Panc1 (cell line): ENCODE measurements at regions of chr16 and their contacts with region 1.

Region 1: DNA sequence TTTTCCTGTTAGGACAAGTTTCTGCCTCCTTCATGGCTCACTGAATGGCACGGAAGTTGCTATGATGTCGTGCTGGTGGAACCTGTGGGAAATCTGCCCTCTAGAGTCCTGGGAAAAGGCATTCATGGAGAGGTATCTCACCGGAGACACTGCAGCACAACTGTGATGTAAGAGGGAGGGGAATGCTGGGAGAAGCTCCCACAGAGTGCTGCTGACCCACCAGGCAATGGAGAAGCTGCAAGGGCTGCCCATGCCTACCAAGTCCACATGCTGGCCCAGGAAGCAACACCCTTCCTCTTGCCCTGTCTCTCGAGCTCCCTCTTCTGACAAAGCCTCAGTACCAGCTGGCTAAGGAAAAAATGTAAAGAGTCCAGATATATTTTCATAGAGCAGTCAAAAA is 45.2 kb upstream of the SLC5A11 start:
- DNase-seq: peak; percentile 12
- ATAC-seq: peak; percentile 84
- H3K4me3 ChIP-seq: no peak overlapping the region
- H3K27ac ChIP-seq: no peak overlapping the region
- H3K4me1 ChIP-seq: no peaks in the 10 kb centered on the region
- H3K27me3 ChIP-seq: no peaks in the 10 kb centered on the region
- CTCF ChIP-seq: peak; percentile 82

Region 2: DNA sequence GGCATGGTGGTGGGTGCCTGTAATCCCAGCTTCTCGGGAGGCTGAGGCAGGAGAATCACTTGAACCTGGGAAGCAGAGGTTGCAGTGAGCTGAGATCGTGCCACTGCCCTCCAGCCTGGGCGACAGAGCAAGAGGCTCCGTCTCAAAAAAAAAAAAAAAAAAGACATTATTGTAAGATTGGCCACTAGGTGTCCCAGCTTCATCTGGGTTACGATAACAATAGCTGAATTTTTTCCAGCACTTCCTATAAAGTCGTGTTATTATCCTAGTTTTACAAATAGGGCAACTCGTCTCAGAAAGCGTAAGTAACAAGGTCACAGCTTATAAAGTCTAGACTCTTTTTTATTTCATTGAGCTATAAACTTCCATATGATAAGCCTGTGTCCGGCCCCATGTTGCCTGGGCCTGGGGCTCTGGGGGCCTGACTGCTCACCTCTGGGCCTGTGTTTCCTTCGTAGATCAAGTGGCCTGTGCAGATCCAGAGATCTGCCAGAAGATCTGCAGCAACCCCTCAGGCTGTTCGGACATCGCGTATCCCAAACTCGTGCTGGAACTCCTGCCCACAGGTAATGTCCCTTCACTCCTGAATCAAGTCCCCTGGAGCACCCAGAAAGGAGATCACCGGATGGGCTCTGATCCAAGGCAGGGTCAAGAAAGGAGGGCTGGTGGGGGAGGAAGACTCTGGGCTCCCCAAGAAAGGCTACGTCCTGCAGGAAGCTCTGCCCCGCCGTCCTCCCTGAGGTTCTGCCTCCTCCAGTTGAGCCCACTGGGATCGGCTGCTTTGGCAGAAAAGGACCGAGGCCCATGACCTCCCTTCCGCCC is 105.8 kb after region 1 on chr16:
- CTCF ChIA-PET with region 1: no interaction called
- POLR2A ChIA-PET with region 1: no interaction called
- in situ Hi-C with region 1: loop called (anchors 25 kb)
- intact Hi-C with region 1: no loop called
- DNase-seq: no peak
- ATAC-seq: peak; percentile 62; the same call in 1 of the 2 replicates
- H3K4me3 ChIP-seq: no peak overlapping the region
- H3K27ac ChIP-seq: no peak overlapping the region
- H3K4me1 ChIP-seq: no peaks in the 10 kb centered on the region
- H3K27me3 ChIP-seq: no peaks in the 10 kb centered on the region
- CTCF ChIP-seq: peak; percentile 77; the same call in 1 of the 2 replicates

Region 3: DNA sequence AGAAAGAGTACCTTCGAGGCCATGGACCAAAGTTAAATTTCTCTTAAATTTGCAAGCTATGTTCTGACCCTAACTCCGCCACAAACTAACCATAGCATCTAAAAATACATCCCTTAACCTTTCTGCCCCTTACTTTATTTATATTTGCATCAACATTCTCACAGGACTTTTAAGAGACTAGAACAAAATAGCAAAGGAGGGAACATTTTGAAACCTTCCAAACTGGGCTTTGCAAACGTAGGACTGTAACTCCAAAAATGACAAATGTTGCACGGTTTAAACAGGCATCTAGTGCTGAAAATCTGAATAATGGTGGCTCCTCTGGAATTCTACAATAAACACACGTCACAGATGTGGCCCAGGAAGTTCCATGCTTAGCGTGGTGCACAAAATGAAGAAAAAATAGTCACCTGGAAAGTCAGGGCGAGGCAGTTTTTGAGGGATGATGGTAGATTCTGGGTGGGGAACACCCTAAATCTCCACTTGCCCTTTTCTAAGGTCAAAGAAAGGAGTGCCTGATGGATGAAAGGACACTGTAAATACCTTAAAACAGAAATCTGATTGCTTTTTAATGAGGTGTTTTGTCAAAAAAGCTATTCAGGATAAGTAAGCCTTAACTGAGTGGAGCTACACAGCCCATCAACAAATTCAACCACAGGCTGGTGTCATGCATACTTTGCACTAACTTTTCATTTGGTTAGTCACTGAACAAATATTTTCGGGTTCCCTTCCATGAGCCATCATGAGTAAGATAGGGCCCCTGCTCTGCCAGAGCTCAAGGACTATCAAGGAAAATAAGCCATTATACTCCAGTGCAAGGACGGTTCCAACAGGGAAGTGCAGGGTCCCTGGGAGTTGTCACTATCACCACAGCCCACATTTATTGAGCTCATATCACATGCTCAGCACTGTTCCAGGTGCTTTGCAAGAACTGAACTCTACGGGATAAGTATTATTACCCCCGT is 193.4 kb after region 1 on chr16:
- CTCF ChIA-PET with region 1: interaction called, 12 read pairs
- POLR2A ChIA-PET with region 1: no interaction called
- in situ Hi-C with region 1: no loop called
- intact Hi-C with region 1: no loop called
- DNase-seq: peak; percentile 85
- ATAC-seq: peak; percentile 90
- H3K4me3 ChIP-seq: peak overlapping the region in 1 of 2 experiments; percentile 31; a peak in 2 of 4 replicates
- H3K27ac ChIP-seq: peak overlapping the region; percentile 92
- H3K4me1 ChIP-seq: peaks cover 87% of the 10 kb centered on the region
- H3K27me3 ChIP-seq: no peaks in the 10 kb centered on the region
- CTCF ChIP-seq: no peak